BJ (cell line): ENCODE measurements at regions of chr1 and their contacts with region 1.

Region 1: DNA sequence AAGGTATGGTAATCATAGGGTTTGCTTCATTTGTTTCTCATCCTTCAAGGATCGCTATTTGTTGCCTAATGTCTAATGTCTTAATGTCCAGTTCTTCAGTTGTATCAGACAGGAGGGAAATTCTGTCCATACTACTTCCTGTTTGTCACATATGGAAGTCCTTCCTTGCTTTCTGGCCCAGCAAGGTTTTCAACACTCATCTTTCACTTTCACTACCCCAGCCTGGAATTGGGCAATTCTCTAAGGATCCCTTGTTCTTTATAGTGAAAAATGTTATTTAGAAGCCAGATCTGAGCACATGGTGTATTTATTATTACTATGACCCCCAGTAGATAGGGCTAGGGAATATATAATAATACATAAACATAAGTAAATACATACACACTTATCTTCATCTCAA is 50.6 kb upstream of the SLC35A3 start:
- DNase-seq: no peak
- H3K4me3 ChIP-seq: no peak overlapping the region
- H3K27me3 ChIP-seq: no peaks in the 10 kb centered on the region
- CTCF ChIP-seq: no peak

Region 2: DNA sequence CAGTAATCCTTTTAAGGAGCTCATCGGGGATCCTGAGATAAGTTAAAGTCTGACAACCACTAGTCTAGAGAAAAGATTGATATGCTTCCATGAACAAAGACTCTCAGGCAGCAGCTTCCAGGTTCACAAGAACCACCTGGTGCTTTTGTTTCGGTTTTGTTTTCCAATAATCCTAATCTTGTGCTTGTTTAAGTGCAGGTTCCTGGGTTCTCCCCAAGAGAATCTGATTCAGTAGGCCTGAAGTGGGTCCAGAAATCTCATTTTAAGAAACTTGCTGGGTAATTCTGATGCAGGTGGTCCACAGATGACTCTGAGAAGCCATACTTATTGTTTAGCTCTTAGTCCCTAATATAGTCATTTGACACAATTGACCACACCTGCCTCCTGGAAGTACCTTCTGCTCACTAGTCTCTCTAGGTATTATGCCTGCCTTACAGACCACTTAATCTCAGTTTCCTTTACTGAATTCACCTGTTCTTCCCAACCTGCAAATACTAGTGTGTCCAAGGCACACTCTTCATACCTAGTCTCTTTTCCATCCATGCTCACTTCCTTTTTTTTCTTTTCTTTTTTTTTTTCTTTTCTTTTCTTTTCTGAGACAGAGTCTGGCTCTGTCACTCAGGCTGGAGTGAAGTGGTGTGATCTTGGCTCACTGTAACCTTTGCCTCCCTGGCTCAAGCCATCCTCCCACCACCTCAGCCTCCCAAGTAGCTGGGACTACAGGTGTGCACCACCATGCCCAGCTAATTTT is 132.3 kb before region 1 on chr1:
- CTCF ChIA-PET with region 1: no interaction called
- POLR2A ChIA-PET with region 1: interaction called, 14 read pairs
- DNase-seq: no peak
- H3K4me3 ChIP-seq: no peak overlapping the region
- H3K27me3 ChIP-seq: no peaks in the 10 kb centered on the region
- CTCF ChIP-seq: no peak